Sciatic nerve (tissue), 2 donors: ENCODE measurements at regions of chr7 and their contacts with region 1.

Region 1: DNA sequence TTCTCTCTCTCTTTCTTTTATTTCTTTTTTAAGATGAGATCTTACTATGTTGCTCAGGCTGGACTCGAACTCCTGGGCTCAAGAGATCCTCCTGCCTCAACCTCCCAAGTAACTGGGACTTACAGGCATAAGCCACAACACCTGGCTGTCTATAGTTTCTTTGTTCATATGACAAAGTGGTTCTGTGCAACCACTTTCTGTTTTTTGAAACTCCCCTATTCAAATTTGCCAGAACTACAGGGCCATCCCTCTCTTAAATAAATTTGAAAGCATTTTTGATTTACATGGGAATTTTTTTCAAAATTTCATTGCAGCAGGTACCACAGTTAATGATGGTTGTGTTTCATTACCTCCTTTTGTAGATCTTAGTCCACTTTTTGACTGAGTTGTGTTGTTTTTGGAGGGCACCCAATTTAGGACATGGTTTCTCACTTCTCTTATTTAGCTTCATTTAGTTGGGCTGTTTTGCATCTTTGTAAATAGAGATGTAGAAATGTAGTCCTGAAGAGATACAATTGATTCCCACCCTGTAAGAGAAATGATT is 119.2 kb downstream of the LRRC4 start:
- DNase-seq: no peak
- ATAC-seq: no peak

Region 2: GRCh38 chr7:127730658-127731276 is 181.3 kb before region 1 on chr7:
- intact Hi-C with region 1: no loop called
- DNase-seq: no peak
- ATAC-seq: no peak

Region 3: DNA sequence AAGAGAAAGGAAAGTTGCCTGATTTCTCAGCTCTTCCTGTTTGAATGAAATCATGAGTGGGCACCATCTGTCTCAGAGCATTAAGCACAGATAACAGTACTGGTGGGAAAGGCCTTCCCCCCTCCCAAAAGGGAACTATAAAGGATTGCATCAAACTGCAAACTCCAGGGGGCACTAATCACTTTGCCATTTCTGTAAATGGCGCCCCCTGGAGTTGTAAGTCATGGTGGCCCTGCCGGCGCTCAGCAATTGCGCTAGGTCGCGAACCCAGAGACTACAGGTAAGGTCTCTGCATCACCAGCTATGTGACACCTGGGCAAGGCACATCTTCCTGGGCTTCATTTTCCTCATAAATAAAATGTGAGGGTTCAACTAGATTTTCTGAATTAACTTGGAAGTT is 108.1 kb after region 1 on chr7:
- intact Hi-C with region 1: no loop called
- DNase-seq: no peak
- ATAC-seq: no peak

Region 4: GRCh38 chr7:129343099-129343700 is 1431.2 kb after region 1 on chr7:
- intact Hi-C with region 1: no loop called
- DNase-seq: no peak
- ATAC-seq: peak; percentile 57

Region 5: DNA sequence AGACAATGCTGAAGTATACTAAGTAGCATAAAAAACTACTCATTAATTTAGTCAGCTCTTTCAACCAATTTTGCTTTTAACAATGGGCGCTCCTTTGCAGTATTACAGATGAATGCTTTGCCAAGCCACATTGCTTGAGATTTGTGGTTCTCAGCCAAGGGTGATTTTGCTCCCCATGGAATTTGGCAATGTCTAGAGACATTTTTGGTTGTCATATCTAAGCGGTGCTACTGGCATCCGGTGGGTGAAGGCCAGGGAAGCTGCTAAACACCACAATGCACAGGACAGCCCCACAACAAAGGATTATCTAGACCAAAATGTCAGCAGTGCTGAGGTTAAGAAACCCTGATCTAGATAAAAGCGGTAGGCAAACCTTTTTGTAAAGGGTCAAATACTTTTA is 1928.7 kb after region 1 on chr7:
- intact Hi-C with region 1: loop called (anchors 5 kb)
- DNase-seq: no peak
- ATAC-seq: no peak